ENCODE measurements at regions of chr15 and their contacts with region 1.

Region 1: DNA sequence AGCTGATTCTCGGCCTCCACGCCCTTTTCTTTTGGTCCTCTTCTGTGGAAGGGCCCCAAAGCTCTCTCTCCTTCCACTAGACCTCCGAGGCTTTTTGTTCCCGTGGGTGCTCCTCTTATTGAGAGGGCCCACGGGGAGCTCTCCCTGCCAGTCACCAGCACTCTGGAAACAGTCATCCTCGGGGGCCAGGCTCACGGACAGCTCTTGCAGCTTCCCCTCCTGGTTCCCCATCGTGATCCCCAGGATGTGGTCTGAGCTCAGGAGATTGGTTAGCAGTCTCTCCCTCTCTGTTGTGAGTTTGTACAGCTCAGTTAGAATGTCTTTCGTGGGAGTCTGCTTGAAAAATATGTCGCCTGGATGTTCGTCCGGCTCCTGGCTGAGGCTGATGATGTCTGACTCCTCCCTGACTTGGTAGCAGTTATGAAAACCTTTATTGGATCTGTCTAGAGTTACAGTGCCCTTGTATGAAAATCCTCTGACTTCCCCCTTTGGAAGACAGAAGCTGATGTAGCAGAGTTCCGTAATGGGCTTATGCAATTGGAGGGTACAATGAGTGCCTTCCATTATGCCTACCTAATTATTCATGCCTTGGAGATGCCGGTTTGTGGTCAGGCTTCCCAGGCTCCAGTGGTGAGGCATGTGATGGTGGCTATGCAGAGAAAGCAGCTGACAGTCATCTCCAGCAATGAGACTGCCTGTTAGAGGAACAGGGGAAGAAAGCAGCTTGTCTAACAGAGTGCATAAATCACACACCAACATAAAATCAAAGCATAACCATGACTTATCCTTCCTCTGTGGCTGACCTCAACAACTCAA is 40.0 kb downstream of the FMN1 start:
- DNase-seq: no peak
- ATAC-seq: no peak
- H3K4me3 ChIP-seq: no peak overlapping the region
- H3K27ac ChIP-seq: no peak overlapping the region
- H3K4me1 ChIP-seq: no peaks in the 10 kb centered on the region
- H3K27me3 ChIP-seq: 0 out of 5 replicates have a peak, but pooled peaks cover 0 to 3% of the 10 kb centered on the region in 2 experiments
- CTCF ChIP-seq: no peak
- EP300 ChIP-seq: no peak
- POLR2A ChIP-seq: no peak
- RAD21 ChIP-seq: no peak

Region 2: DNA sequence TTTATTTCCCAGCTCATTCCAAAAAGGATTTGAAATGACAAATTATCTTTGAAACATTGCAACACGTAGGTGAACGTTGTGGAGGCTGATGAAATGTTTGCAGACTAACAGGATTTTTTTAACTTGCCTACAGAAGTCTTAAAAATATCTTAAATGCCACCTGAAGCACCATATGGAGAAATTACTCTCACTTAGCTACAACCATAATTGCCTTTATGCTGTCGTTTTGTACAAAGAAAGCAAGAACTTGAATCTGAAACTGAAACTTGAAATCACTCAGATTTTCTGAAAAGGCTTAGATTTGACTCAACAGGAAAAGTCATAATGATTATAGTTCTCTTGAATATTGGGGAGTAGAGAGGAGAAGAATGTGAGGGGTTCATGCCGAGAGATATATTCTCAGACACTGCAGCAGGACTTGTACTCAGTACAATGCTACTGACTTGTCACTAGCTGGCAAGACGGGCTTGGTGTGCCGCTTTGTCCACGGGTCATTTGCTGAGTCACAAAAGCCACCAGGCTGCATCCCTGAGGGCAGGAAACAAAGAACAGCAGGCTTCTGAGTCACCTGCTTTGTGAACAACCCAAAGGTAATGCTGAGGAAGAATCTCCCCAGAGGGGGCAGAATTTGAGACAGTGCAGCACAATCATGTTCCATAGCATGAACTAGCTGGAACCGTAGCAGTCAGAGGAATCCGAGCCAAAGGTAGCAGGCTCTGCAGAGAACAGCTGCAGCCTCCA is 47.1 kb after region 1 on chr15:
- CTCF ChIA-PET with region 1: no interaction called
- POLR2A ChIA-PET with region 1: no interaction called
- in situ Hi-C with region 1: loop called (anchors 5 kb)
- intact Hi-C with region 1: no loop called
- DNase-seq: peak; percentile 76
- ATAC-seq: peak; percentile 93
- H3K4me3 ChIP-seq: peak overlapping the region in 2 of 3 experiments; percentile 15 to 27; a peak in 2 of 6 replicates
- H3K27ac ChIP-seq: no peak overlapping the region
- H3K4me1 ChIP-seq: peaks cover 24% of the 10 kb centered on the region
- H3K27me3 ChIP-seq: no peaks in the 10 kb centered on the region
- CTCF ChIP-seq: peak; percentile 31
- EP300 ChIP-seq: no peak
- POLR2A ChIP-seq: no peak
- RAD21 ChIP-seq: no peak

Region 3: DNA sequence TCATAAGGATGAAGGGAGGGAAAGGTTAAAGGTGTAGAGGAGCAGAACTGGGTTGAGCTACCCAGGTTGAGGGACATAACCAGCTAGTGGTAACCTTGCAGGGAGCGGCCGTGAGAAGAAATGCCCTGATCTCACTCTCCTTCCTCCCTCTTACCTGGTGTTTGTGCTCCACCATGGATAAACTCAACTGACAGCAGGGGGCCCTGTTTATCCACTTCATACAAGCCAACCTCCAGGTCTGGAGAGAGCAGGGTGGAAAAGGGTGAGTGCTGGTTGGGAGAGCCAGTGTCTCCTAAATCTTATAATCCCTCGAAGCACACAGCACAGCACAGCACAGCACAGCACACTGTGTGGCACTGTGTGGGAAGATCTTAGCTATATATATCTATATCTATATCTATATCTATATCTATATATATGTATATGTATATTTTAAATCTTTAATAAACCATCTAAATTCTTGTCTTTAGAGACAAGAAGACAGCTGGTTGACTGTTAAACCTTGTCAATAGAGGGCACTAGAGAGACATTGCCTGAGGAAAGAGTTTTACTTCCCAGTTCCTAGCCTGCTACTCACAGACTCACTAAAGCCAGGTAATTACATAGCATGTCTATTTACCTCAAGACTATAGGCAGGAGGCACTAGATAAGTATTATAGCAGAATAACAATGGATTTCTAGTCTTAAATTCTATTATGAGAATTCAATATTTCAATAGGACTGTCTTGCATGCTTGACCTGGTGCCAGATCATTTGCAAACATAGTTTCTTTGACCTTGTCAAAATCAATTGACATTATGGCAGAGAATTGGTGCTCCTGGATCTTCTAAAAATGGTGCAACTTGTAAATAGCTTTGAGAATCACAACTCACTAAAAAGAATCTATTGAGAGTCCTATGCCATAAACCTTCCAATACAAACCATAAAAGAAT is 61.6 kb after region 1 on chr15:
- CTCF ChIA-PET with region 1: no interaction called
- POLR2A ChIA-PET with region 1: no interaction called
- in situ Hi-C with region 1: no loop called
- intact Hi-C with region 1: no loop called
- DNase-seq: no peak
- ATAC-seq: no peak
- H3K4me3 ChIP-seq: no peak overlapping the region
- H3K27ac ChIP-seq: no peak overlapping the region
- H3K4me1 ChIP-seq: no peaks in the 10 kb centered on the region
- H3K27me3 ChIP-seq: no peaks in the 10 kb centered on the region
- CTCF ChIP-seq: no peak
- EP300 ChIP-seq: no peak
- POLR2A ChIP-seq: no peak
- RAD21 ChIP-seq: no peak

Measured in HepG2 (cell line).